WTC11 (cell line): ENCODE measurements at regions of chr16 and their contacts with region 1.

Region 1: DNA sequence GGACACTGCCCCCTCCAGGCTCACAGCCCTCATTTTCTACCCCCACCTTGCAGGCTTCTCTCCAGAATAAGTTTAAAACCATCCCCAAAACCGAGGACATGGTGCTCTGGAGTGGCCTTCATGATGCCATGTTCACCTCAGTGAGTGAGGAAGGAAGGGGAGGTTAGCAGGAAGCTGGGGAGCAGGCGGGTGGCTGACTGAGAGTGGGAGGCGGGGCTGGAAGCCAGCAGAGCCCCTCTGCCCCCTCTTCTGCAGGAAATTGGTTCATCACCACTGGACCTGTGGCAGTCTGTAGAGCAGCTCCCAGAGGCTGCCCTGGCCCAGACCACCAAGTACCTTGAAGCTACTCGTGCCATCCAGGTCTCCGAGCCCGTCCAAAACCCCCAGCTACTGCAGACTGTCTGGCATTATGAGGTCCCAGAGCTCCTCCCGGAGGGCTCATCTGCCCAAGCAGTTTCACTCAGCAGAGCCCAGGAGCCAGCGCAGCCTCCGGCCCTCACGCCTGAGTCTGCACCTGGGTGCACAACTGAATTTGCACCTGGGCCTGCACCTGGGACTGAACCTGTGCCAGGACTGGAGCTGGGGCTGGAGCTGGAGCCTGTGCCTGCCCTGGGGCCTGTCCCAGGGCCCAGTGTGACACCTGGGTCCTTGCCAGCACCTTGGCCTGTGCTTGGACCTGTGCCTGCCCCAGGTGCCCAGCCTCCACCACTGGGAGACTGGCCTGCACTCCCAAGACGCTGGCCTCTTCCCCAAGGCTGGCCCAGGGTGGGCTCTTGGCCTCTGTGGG is 19.0 kb downstream of the C16orf96 start:
- DNase-seq: peak; percentile 66
- ATAC-seq: peak; percentile 71
- H3K4me3 Mint-ChIP-seq: no peak overlapping the region
- H3K27ac Mint-ChIP-seq: no peak overlapping the region
- H3K4me1 Mint-ChIP-seq: peaks cover 18% of the 10 kb centered on the region
- H3K27me3 Mint-ChIP-seq: peaks cover 5% of the 10 kb centered on the region
- CTCF ChIP-seq: no peak

Region 2: DNA sequence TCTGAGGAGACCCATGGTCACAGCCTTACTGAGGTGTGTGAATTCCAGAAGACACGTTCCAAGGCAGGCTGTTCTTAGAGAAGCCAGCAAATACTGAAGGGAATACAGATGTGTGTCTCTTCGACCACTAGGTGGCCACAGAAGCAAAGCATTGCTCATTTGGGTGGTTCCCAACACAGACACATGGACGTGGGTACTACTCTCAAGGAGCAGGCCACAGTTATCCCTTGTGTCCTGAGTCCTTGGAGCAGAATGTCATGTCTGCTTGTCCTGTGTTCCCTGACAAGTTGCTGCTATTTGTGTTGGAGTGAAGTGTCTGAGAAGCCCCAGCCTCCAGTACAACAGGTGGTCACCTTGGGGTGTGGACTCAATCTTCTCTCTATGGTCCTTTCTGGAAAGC is 68.7 kb before region 1 on chr16:
- CTCF ChIA-PET with region 1: interaction called, 12 read pairs
- POLR2A ChIA-PET with region 1: interaction called, 3 read pairs
- DNase-seq: peak; percentile 51
- ATAC-seq: peak; percentile 88
- H3K4me3 Mint-ChIP-seq: no peak overlapping the region
- H3K27ac Mint-ChIP-seq: peak overlapping the region; percentile 13
- H3K4me1 Mint-ChIP-seq: peaks cover 6% of the 10 kb centered on the region; the same call in 1 of the 2 replicates
- H3K27me3 Mint-ChIP-seq: no peaks in the 10 kb centered on the region; the same call in 1 of the 2 replicates
- CTCF ChIP-seq: peak; percentile 88

Region 3: DNA sequence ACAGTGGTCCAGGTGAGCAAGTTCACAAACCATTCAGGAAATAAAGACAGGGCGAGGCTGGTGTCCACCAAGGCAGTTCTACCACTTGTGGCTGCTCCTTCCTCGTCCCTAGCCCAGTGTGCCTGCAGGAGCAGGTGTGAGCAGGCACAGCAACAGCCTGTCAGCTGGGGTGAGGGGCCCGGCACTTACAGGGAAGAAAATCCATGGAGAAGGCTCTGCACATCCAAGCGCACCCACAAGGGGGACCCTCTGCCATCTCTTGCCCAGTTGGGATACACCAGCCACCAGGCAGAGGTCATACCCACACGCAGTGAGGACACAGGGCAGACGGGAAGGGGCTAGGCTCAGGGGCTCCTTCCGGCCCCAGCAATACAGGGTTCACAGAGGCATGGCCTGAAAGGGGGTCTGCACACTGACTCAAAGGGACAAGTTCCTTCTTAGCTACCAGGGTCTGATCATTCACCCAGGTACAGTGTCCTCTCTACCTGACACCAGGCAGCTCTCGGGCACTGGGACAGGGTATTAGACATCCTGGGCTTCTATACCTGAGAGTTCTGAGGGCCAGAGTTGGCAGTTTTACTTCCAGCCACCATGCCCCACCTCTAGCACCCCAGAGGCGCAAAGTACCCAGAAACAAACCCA is 63.5 kb before region 1 on chr16:
- CTCF ChIA-PET with region 1: interaction called, 21 read pairs
- POLR2A ChIA-PET with region 1: interaction called, 3 read pairs
- DNase-seq: peak; percentile 89
- ATAC-seq: peak; percentile 94
- H3K4me3 Mint-ChIP-seq: no peak overlapping the region
- H3K27ac Mint-ChIP-seq: peak overlapping the region; percentile 61; the same call in 1 of the 2 replicates
- H3K4me1 Mint-ChIP-seq: peaks cover 7% of the 10 kb centered on the region; the same call in 1 of the 2 replicates
- H3K27me3 Mint-ChIP-seq: no peaks in the 10 kb centered on the region
- CTCF ChIP-seq: peak; percentile 71